PC-9 (cell line): ENCODE measurements at regions of chr1 and their contacts with region 1.

Region 1: DNA sequence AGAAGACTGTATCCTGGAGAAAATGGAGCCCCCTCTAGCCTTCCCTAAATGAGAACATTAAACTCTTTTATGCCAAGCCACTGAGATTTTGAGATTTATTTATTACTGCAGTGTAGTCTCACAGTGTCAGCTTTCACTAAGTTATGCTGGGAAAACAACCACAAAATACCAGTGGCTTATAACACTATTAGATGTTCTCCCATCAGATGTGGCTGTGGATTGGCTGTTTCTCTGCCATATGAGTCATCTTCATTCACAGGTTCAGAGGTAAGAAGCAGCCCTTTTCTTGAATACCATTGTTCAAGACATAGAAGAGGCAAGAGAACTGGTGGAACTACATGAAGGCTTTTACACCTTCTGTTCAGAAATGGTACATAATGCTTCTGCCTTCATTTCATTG is 32.1 kb upstream of the ST6GALNAC5 start:
- DNase-seq: no peak
- H3K4me3 ChIP-seq: no peak overlapping the region
- H3K27ac ChIP-seq: no peak overlapping the region
- H3K4me1 ChIP-seq: no peaks in the 10 kb centered on the region
- H3K27me3 ChIP-seq: no peaks in the 10 kb centered on the region
- CTCF ChIP-seq: no peak

Region 2: GRCh38 chr1:76891931-76892622 is 56.9 kb after region 1 on chr1:
- CTCF ChIA-PET with region 1: no interaction called
- POLR2A ChIA-PET with region 1: no interaction called
- intact Hi-C with region 1: loop called (anchors 2 kb)
- DNase-seq: no peak
- H3K4me3 ChIP-seq: no peak overlapping the region
- H3K27ac ChIP-seq: no peak overlapping the region
- H3K4me1 ChIP-seq: no peaks in the 10 kb centered on the region
- H3K27me3 ChIP-seq: no peaks in the 10 kb centered on the region
- CTCF ChIP-seq: no peak